Heart right ventricle (tissue), 16 donors: ENCODE measurements at regions of chr20 and their contacts with region 1.

Region 1: DNA sequence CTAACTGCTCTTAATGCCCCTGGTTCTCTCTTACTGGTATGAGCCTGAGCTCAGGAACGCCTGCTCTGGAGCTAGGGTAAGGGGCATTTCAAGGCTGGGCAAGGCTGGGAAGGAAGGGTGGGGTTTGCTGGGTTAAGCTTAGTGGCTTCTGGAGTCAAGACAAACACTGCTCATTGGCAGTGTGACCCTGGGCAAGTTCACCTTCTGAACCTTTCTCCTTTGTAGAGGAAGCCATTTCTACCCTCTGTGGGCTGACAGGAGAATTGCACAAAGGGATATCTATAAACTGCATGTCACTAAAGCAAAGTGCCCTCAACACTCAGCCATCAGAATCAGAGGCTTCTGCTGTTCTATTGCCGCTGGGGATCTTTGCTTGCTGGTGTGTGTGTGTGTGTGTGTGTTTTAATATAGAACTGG is 20.3 kb upstream of the LRRN4 start:
- DNase-seq: peak in 1 of 2 donors; percentile 41
- ATAC-seq: peak; percentile 56 to 87 (median 81)
- H3K4me3 ChIP-seq: no peak overlapping the region
- H3K27ac ChIP-seq: peak overlapping the region in 9 of 10 donors; percentile 35 to 85 (median 74)
- H3K4me1 ChIP-seq: peaks cover 0 to 22% (median 5%) of the 10 kb centered on the region in 9 donors
- H3K27me3 ChIP-seq: no peaks in the 10 kb centered on the region
- CTCF ChIP-seq: peak in 8 of 9 donors; percentile 17 to 53 (median 32)

Region 2: DNA sequence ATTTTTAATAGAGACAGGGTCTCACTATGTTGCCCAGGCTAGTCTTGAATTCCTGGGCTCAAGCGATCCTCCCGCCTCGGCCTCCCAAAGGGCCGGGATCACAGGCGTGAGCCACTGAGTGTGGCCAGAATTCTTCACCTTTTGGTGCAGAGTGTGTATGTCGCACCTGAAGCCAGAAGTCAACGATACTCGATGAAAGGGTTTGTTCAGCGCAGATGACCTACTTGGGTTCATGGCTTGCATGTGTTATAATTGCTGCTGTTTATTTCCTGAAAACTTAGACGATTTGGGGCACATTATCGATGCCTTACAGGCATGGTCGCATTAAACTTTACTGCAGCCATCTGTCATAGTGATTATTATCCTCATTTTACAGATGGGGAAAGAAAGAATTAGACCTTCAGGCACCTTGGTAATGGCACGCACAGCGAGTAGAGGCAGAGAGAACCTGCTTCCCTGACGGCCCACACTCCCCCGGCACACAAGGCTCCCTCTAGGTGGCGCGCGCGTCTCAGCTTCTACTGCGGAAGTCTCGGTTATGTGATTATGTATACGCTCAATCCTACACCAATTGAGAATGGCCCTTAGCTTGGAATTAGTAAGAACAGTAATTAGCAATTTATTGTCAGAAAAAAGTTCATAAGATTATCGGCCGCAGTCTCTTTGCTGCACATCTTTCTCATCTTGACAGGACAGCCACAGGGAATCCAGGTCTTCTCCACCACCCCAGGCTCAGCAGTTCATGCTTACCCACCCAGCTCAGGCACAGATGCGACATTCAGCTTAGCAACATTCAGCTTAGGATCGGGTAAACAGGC is 544.6 kb before region 1 on chr20:
- intact Hi-C with region 1: loop called (anchors 1 to 10 kb)
- DNase-seq: peak; percentile 79 to 83
- ATAC-seq: peak; percentile 67 to 95 (median 90)
- H3K4me3 ChIP-seq: peak overlapping the region in 3 of 10 donors; percentile 8 to 31 (median 15)
- H3K27ac ChIP-seq: no peak overlapping the region
- H3K4me1 ChIP-seq: peaks cover 0 to 32% (median 9%) of the 10 kb centered on the region in 9 donors
- H3K27me3 ChIP-seq: no peaks in the 10 kb centered on the region
- CTCF ChIP-seq: peak; percentile 36 to 88 (median 75)

Region 3: GRCh38 chr20:5749952-5750779 is 324.0 kb before region 1 on chr20 and contains the start of gene SHLD1:
- intact Hi-C with region 1: no loop called
- DNase-seq: peak; percentile 80 to 91
- ATAC-seq: peak; percentile 96 to 99 (median 98)
- H3K4me3 ChIP-seq: peak within 1 kb of the TSS; percentile 45 to 76 (median 66)
- H3K27ac ChIP-seq: peak within 1 kb of the TSS; percentile 80 to 93 (median 84)
- H3K4me1 ChIP-seq: peaks cover 0 to 13% (median 7%) of the 10 kb centered on the region in 9 donors
- H3K27me3 ChIP-seq: no peaks in the 10 kb centered on the region
- CTCF ChIP-seq: no peak
- total RNA-seq, gene SHLD1: 3.2 to 8.5 (median 4.8) TPM

Region 4: GRCh38 chr20:5788385-5788895 is 285.7 kb before region 1 on chr20:
- intact Hi-C with region 1: loop called in 2 of 10 experiments (anchors 10 kb)
- DNase-seq: peak; percentile 35 to 86
- ATAC-seq: peak; percentile 86 to 98 (median 92)
- H3K4me3 ChIP-seq: no peak overlapping the region
- H3K27ac ChIP-seq: no peak overlapping the region
- H3K4me1 ChIP-seq: peaks cover 0 to 26% (median 14%) of the 10 kb centered on the region in 9 donors
- H3K27me3 ChIP-seq: no peaks in the 10 kb centered on the region
- CTCF ChIP-seq: peak; percentile 84 to 95 (median 92)

Region 5: GRCh38 chr20:5806457-5807263 is 267.5 kb before region 1 on chr20:
- intact Hi-C with region 1: loop called in 2 of 10 experiments (anchors 10 kb)
- DNase-seq: no peak
- ATAC-seq: peak in 7 of 8 donors; percentile 33 to 83 (median 56)
- H3K4me3 ChIP-seq: no peak overlapping the region
- H3K27ac ChIP-seq: no peak overlapping the region
- H3K4me1 ChIP-seq: peaks cover 0 to 23% (median 15%) of the 10 kb centered on the region in 9 donors
- H3K27me3 ChIP-seq: no peaks in the 10 kb centered on the region
- CTCF ChIP-seq: peak in 6 of 9 donors; percentile 14 to 47 (median 29)

Region 6: DNA sequence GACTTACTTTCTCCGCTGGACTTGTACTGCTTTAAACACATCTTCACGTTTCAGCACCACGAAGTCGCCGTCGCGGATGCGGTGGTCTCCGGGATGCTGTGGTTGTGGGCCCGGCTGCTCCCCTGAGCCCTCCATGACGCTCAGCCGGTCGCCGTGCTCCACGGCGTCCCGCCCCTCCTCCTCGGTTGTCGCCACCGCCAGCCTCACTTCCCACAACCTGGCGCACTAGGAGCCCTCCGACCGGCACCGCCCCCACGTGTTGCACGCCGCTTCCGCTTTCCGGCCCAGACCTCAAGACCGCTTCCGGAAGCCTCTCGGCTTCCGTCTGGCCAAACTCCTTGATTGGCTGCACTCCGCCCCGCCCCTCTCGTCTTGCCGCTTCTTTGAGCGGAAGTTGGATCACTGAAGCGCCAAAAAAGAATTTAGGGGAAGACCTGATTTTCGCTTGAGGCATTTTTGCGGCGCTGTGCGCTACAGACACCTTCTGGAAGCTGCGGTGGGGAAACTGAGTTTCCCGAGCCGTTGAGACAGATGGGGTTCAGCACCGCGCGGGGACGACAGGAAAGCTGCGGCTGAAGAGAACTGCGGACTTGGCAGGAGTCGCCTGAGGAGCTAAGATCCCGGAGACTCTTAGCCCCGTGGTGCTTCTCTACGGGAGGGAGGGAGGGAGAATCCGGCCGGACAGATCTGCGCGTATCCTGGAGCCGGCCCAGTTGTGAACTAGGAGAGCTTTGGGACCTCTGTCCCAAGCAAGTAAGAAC is 123.7 kb before region 1 on chr20 and contains the starts of genes MCM8 and TRMT6:
- intact Hi-C with region 1: loop called in 4 of 10 experiments (anchors 2 to 5 kb)
- DNase-seq: peak; percentile 95
- ATAC-seq: peak; percentile 100
- H3K4me3 ChIP-seq: peak within 1 kb of the TSS; percentile 69 to 98 (median 84)
- H3K27ac ChIP-seq: peak within 1 kb of the TSS in 9 of 10 donors; percentile 59 to 87 (median 77)
- H3K4me1 ChIP-seq: peaks cover 0 to 37% (median 19%) of the 10 kb centered on the region in 9 donors
- H3K27me3 ChIP-seq: no peaks in the 10 kb centered on the region
- CTCF ChIP-seq: peak in 1 of 9 donors; percentile 8
- total RNA-seq, gene MCM8: 6.1 to 8.9 (median 6.4) TPM
- total RNA-seq, gene TRMT6: 7.6 to 12.8 (median 9.2) TPM

Region 7: DNA sequence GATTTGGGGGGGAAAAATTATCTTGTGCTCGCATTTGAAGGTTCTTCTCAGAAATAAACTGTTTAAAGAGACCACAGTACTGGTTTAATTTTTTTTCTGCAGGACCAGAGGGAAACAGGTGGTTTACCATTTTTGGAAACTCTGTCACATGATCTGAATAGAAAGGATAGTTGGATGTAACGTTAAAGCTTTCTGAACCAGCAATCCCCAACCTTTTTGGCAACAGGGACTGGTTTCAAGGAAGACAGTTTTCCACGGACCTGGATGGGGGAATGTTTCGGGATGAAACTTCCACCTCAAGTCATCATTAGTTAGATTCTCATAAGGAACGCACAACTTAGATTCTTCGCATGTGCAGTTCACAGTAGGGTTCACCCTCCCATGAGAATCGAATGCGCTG is 73.3 kb before region 1 on chr20:
- intact Hi-C with region 1: loop called in 1 of 10 experiments (anchors 5 kb)
- DNase-seq: no peak
- ATAC-seq: no peak
- H3K4me3 ChIP-seq: no peak overlapping the region
- H3K27ac ChIP-seq: no peak overlapping the region
- H3K4me1 ChIP-seq: peaks cover 0 to 11% (median 5%) of the 10 kb centered on the region in 9 donors
- H3K27me3 ChIP-seq: no peaks in the 10 kb centered on the region
- CTCF ChIP-seq: no peak

Region 8: DNA sequence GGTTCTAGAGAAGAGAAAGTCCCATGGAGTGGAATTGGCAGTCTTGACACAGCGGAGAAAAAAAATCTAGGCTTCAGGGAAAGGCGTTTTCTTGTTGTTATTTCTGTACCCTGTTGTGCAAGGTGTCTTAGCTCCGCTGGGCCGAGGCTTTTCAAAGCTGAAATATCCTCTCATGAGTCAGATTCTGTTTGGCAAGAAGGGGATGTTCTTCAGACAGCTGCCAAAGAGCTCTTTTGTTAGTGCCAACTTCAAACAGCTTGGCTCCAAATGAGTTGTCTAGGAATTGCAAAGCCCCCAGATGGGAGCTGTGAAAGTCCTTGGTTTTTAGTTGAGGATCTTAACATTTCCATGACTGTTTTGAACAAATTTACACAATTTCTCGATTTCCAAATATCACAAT is 65.9 kb before region 1 on chr20:
- intact Hi-C with region 1: loop called in 2 of 10 experiments (anchors 2 to 5 kb)
- DNase-seq: peak; percentile 18 to 22
- ATAC-seq: peak in 5 of 8 donors; percentile 28 to 66 (median 36)
- H3K4me3 ChIP-seq: peak overlapping the region in 8 of 10 donors; percentile 65 to 88 (median 81)
- H3K27ac ChIP-seq: peak overlapping the region; percentile 2 to 94 (median 84)
- H3K4me1 ChIP-seq: peaks cover 0 to 45% (median 28%) of the 10 kb centered on the region in 9 donors
- H3K27me3 ChIP-seq: no peaks in the 10 kb centered on the region
- CTCF ChIP-seq: no peak